ENCODE measurements at regions of chr2 and their contacts with region 1.

Region 1: GRCh38 chr2:139652385-139652784 is 872.2 kb upstream of the NXPH2 start:
- DNase-seq: no peak
- ATAC-seq: no peak
- H3K4me3 ChIP-seq: no peak overlapping the region
- H3K27ac ChIP-seq: no peak overlapping the region
- H3K4me1 ChIP-seq: no peaks in the 10 kb centered on the region
- H3K27me3 ChIP-seq: no peaks in the 10 kb centered on the region
- CTCF ChIP-seq: no peak

Region 2: DNA sequence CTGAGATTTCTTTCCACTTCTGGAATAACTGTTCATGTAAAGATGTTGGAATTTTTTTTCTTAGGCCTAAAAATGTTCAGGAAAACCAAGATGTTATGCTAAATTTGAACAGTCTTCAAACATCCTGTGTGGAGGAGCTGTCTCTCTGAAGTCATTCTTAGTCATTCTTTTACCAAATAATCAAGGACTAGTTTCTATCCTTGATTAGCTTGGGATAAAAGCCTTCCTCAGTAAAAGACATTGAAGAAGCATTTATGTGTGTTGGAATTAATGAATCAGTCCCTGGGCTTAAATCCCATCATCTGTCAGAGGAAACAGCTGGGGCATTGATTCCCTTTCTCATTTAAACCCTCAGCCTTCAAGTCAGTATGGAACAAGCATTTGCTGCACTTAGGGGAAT is 572.1 kb before region 1 on chr2:
- CTCF ChIA-PET with region 1: no interaction called
- POLR2A ChIA-PET with region 1: no interaction called
- in situ Hi-C with region 1: no loop called
- intact Hi-C with region 1: no loop called
- DNase-seq: no peak
- ATAC-seq: no peak
- H3K4me3 ChIP-seq: no peak overlapping the region
- H3K27ac ChIP-seq: no peak overlapping the region
- H3K4me1 ChIP-seq: no peaks in the 10 kb centered on the region
- H3K27me3 ChIP-seq: no peaks in the 10 kb centered on the region
- CTCF ChIP-seq: no peak

Region 3: GRCh38 chr2:139876321-139876720 is 223.9 kb after region 1 on chr2:
- CTCF ChIA-PET with region 1: no interaction called
- POLR2A ChIA-PET with region 1: interaction called, 12 read pairs
- in situ Hi-C with region 1: no loop called
- intact Hi-C with region 1: no loop called
- DNase-seq: no peak
- ATAC-seq: no peak
- H3K4me3 ChIP-seq: no peak overlapping the region
- H3K27ac ChIP-seq: no peak overlapping the region
- H3K4me1 ChIP-seq: no peaks in the 10 kb centered on the region
- H3K27me3 ChIP-seq: no peaks in the 10 kb centered on the region
- CTCF ChIP-seq: no peak